Mucosa of descending colon (tissue), 3 donors: ENCODE measurements at regions of chr6 and their contacts with region 1.

Region 1: GRCh38 chr6:110682460-110682853 is 132.8 kb downstream of the CDK19 start:
- DNase-seq: peak in 1 of 3 donors; percentile 92
- ATAC-seq: peak; percentile 99
- H3K4me3 ChIP-seq: no peak overlapping the region
- H3K4me1 ChIP-seq: peaks cover 7% of the 10 kb centered on the region
- CTCF ChIP-seq: peak; percentile 26

Region 2: DNA sequence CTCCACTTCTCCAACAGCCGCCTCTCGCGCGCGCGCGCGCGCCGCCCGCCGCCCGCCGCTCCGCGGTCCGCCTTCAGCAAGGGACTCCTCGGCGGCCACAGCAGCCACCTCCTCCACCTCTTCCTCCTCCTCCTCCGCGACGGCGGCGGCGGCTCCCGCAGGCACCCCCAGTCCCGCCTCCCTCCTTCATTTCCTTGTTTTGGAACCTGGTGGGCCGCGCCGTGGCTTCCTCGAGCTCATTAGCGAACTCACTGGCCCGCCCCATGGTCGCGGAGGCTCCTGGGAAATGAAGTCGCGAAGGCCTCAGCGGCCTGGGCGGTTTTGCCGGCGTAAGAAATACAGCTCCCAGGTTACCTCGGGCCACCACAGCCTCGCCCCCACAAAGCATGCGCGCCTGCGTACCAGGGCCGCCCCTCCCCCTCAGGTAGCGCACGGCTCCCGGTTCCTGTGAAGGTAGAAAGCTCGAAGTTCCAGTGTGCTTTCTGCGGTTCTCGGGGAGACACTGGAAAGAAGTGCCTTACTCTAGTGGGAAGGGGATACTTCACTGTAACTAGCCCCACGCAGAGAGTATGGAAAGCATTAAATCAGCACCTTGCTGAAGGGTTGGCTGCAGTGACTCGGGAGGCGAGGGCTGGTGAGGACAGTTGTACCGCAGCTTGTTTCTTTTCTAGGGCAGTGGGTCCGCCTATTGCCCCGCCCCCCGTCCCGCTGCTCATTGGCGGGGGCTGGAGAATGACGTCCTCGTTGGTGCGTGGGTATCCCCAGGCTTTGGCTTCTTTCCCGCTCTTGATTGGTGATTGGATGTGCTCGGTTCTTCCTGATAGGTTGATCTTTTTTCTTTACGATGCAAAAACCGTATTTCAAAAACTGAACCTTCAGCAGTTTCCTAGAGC is 133.0 kb after region 1 on chr6 and contains the start of gene CDK19:
- intact Hi-C with region 1: loop called in 1 of 2 experiments (anchors 10 kb)
- DNase-seq: peak; percentile 98 to 99 (median 99)
- ATAC-seq: peak; percentile 92
- H3K4me3 ChIP-seq: peak within 1 kb of the TSS; percentile 84
- H3K4me1 ChIP-seq: peaks cover 16% of the 10 kb centered on the region
- CTCF ChIP-seq: no peak
- total RNA-seq, gene CDK19: 24.3 to 34.3 (median 27.7) TPM

Region 3: GRCh38 chr6:110897433-110897832 is 215.0 kb after region 1 on chr6:
- intact Hi-C with region 1: no loop called
- DNase-seq: no peak
- ATAC-seq: no peak
- H3K4me3 ChIP-seq: no peak overlapping the region
- H3K4me1 ChIP-seq: no peaks in the 10 kb centered on the region
- CTCF ChIP-seq: no peak

Region 4: DNA sequence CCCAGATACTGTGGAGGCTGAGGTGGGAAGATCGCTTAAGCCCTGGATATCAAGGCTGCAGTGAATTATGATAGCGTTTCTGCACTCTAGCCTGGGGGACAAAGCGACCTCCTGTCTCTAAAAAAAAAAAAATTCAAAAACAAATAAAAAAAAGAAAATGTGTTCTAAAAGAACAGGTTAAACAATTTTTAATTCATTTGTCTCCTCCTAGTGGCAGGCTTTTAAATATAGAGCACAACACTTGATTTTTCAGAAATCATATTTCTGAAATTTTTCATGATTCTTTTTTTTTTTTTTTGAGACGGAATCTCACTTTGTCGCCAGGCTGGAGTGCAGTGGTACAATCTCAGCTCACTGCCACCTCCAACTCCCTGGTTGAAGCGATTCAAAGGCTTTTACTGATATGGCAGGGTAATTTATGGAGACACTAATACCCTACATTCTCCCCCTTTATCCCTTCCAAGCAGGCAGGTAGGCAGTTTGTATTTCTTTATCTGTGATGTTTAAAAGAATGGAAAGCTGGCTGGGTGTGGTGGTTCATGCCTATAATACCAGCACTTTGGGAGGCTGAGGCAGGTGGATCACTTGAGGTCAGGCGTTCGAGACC is 267.3 kb after region 1 on chr6:
- intact Hi-C with region 1: loop called (anchors 5 to 10 kb)
- DNase-seq: no peak
- ATAC-seq: no peak
- H3K4me3 ChIP-seq: no peak overlapping the region
- H3K4me1 ChIP-seq: peaks cover 2% of the 10 kb centered on the region
- CTCF ChIP-seq: no peak

Region 5: GRCh38 chr6:110958329-110959192 is 276.1 kb after region 1 on chr6 and contains the start of gene GTF3C6:
- intact Hi-C with region 1: loop called (anchors 5 to 10 kb)
- DNase-seq: peak; percentile 94 to 97 (median 96)
- ATAC-seq: peak; percentile 100
- H3K4me3 ChIP-seq: peak within 1 kb of the TSS; percentile 48
- H3K4me1 ChIP-seq: peaks cover 10% of the 10 kb centered on the region
- CTCF ChIP-seq: no peak
- total RNA-seq, gene GTF3C6: 69.7 to 76.4 (median 73.5) TPM